GM10248 (cell line): ENCODE measurements at regions of chr15 and their contacts with region 1.

Region 1: GRCh38 chr15:38563723-38564519 is 693 bp downstream of the RASGRP1 start:
- DNase-seq: peak; percentile 83
- CTCF ChIP-seq: peak; percentile 97

Region 2: GRCh38 chr15:38490242-38490922 is 73.5 kb before region 1 on chr15:
- CTCF ChIA-PET with region 1: interaction called, 10 read pairs
- POLR2A ChIA-PET with region 1: no interaction called
- DNase-seq: no peak
- CTCF ChIP-seq: no peak

Region 3: DNA sequence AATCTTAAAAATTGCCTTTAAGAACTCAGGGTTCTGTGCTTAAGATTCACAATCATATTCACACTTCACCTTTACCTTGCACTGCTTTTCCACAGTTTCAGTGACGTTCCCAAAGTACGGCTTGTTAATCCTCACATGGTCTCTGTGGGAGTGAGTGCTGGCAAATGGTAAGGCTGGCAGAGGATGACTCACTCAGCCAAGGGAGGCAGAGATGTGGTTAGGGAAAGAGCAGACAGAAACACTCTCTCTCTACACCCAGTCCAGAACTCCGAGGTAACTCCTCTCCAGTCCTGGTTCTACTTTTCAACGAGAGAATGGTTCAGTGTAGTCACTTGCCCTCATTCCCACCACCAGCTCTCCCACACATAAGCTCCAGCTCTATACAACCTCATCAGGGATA is 32.4 kb before region 1 on chr15:
- CTCF ChIA-PET with region 1: interaction called, 14 read pairs
- POLR2A ChIA-PET with region 1: no interaction called
- DNase-seq: no peak
- CTCF ChIP-seq: no peak

Region 4: GRCh38 chr15:38618242-38618955 is 54.5 kb after region 1 on chr15:
- CTCF ChIA-PET with region 1: interaction called, 22 read pairs
- POLR2A ChIA-PET with region 1: no interaction called
- DNase-seq: no peak
- CTCF ChIP-seq: no peak

Region 5: GRCh38 chr15:38647683-38648082 is 83.8 kb after region 1 on chr15:
- CTCF ChIA-PET with region 1: interaction called, 11 read pairs
- POLR2A ChIA-PET with region 1: no interaction called
- DNase-seq: no peak
- CTCF ChIP-seq: no peak

Region 6: GRCh38 chr15:38683382-38684242 is 119.7 kb after region 1 on chr15:
- CTCF ChIA-PET with region 1: interaction called, 179 read pairs
- POLR2A ChIA-PET with region 1: interaction called, 4 read pairs
- DNase-seq: peak; percentile 52
- CTCF ChIP-seq: peak; percentile 82

Region 7: DNA sequence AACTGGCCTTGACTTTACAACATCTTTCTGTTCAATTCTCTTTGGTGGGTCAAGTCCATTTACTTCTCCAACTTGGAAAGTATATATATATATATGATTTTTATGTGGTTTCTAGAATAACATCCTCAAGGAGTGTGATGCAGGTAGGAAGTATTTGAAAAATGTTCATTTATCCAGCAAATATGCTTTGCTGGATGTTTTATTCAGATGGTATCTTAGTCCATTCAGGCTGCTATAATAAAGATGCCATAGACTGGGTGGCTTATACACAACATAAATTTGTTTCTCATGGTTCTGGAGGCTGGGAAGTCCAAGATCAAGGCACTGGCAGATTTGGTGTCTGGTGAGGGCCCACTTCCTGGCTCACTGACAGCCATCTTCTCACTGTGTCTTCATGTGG is 169.4 kb after region 1 on chr15:
- CTCF ChIA-PET with region 1: no interaction called
- POLR2A ChIA-PET with region 1: no interaction called
- DNase-seq: no peak
- CTCF ChIP-seq: no peak

Region 8: DNA sequence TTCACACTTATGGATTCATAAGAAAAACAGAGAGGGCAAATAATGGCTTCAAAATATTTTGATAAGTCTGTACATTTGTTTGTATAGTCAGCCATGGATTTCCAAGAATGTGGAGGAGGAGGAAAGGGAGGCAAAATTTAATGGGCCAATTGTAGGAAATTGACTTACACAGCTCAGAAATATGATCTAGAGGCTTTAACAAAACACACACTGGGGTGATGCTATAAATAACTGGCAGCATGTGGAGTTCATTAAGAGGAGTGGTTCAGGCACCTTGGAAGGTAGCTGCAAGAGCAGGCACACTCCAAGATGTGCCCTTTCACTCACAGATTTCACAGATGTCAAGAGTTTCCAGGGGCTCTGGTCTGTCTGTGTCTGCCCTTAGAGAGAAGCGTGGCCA is 194.1 kb after region 1 on chr15:
- CTCF ChIA-PET with region 1: no interaction called
- POLR2A ChIA-PET with region 1: no interaction called
- DNase-seq: no peak
- CTCF ChIP-seq: no peak